Activated naive CD4-positive, alpha-beta T cell treated with anti-CD3 and anti-CD28 coated beads for 36 hours (primary cell): ENCODE measurements at regions of chr16 and their contacts with region 1.

Region 1: DNA sequence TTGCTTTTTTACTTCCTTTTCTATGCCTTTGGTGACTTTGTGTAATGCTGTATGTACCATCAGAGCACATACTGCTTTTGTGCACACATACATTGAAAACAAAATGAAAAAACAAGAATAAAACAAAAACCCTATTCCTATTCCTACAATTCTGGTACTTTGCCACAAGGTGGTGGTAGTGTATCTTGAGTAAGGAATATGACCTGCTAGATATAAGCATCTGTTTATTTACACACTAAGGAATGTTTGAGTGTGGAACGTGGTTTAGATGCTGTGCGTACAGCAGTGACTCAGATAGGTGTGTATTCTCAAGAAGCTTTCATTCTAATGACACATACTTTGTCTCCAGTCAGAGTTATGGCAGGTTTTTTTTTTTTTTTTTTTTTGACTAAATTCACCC is 606.2 kb downstream of the WWOX start:
- DNase-seq: no peak
- H3K4me3 Mint-ChIP-seq: no peak overlapping the region
- H3K27ac Mint-ChIP-seq: no peak overlapping the region
- H3K4me1 Mint-ChIP-seq: peaks cover 2% of the 10 kb centered on the region
- H3K27me3 Mint-ChIP-seq: no peaks in the 10 kb centered on the region

Region 2: GRCh38 chr16:78324649-78325285 is 380.9 kb before region 1 on chr16:
- CTCF ChIA-PET with region 1: no interaction called
- intact Hi-C with region 1: no loop called
- DNase-seq: no peak
- H3K4me3 Mint-ChIP-seq: no peak overlapping the region
- H3K27ac Mint-ChIP-seq: no peak overlapping the region
- H3K4me1 Mint-ChIP-seq: no peaks in the 10 kb centered on the region
- H3K27me3 Mint-ChIP-seq: no peaks in the 10 kb centered on the region

Region 3: DNA sequence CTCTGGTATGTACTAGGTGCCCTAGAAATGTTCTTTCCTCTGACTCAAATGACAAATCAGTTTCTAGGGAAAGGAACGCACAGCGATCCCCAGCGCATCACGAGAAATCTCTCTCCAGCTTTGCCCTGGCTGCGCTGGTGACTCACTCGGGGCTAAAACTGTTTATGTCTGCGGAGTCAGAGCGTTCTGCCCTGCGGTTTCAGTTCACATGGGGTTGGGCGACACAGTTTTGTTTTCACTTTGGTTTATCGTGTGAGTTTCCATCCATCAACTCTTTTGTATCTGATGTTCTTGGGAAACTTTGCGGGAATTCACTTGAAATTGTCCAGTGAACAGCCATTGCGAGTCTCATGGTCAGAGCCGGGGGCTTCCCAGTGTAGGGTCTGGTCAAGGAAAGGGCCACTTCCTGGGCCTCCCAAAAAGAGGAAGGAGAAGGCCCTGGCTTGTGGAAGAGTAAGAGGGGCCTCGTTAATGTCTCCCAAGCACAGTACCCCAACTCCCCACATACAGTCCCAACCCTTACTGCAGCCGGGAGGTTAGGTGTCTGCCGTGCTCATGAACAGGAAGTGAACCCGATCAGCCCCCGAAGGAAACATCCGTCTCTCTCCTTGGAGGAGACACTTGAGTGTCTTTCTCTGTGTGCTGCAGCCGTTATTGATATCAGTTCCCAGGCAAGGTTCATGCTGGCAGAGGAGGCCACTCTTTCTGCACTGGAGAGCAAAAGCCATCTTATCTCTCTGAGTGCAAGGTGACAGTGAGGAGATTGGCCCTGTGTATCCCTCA is 37.0 kb after region 1 on chr16:
- CTCF ChIA-PET with region 1: no interaction called
- intact Hi-C with region 1: loop called (anchors 2 kb)
- DNase-seq: peak; percentile 86
- H3K4me3 Mint-ChIP-seq: peak overlapping the region; percentile 66
- H3K27ac Mint-ChIP-seq: peak overlapping the region; percentile 42
- H3K4me1 Mint-ChIP-seq: peaks cover 22% of the 10 kb centered on the region
- H3K27me3 Mint-ChIP-seq: no peaks in the 10 kb centered on the region

Region 4: GRCh38 chr16:78770353-78771091 is 64.8 kb after region 1 on chr16:
- CTCF ChIA-PET with region 1: interaction called, 10 read pairs
- intact Hi-C with region 1: loop called (anchors 1 kb)
- DNase-seq: peak; percentile 84
- H3K4me3 Mint-ChIP-seq: no peak overlapping the region
- H3K27ac Mint-ChIP-seq: no peak overlapping the region
- H3K4me1 Mint-ChIP-seq: peaks cover 18% of the 10 kb centered on the region
- H3K27me3 Mint-ChIP-seq: no peaks in the 10 kb centered on the region

Region 5: DNA sequence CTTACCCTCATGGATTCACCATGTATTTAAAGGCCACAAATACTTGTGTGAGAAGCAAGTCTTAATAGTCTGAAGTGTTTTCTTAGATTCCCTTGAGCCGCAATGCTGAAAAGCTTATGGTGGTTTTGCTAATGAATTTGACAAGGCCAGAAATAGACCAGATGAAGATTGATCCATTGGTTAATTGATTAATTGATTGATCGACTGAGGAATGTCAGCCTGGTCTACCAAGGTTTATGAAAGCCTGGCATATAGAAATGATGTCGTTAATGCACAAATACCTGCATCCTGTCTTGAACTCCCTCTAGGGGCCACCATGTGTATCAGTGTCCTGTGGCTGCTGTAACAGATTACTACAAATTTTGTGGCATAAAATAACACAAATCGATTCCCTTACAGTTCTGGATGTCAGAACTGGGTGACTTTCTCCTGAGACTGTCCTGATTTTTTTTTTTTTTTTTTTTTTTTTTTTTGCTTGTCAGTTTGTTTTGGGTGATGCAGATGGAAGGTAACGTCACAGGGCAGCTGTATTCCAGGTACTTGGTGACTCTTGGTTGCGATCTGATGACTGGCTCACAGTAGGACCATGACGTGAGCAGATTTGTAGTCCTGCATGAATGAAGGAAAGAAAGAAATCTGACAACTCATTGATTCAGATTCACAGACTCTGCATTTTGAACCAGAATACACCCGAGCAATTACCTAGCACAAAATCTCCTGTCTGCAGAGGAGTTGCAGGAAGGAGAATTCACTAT is 341.7 kb after region 1 on chr16:
- CTCF ChIA-PET with region 1: no interaction called
- intact Hi-C with region 1: loop called (anchors 1 kb)
- DNase-seq: peak; percentile 17
- H3K4me3 Mint-ChIP-seq: no peak overlapping the region
- H3K27ac Mint-ChIP-seq: no peak overlapping the region
- H3K4me1 Mint-ChIP-seq: peaks cover 18% of the 10 kb centered on the region
- H3K27me3 Mint-ChIP-seq: no peaks in the 10 kb centered on the region

Region 6: DNA sequence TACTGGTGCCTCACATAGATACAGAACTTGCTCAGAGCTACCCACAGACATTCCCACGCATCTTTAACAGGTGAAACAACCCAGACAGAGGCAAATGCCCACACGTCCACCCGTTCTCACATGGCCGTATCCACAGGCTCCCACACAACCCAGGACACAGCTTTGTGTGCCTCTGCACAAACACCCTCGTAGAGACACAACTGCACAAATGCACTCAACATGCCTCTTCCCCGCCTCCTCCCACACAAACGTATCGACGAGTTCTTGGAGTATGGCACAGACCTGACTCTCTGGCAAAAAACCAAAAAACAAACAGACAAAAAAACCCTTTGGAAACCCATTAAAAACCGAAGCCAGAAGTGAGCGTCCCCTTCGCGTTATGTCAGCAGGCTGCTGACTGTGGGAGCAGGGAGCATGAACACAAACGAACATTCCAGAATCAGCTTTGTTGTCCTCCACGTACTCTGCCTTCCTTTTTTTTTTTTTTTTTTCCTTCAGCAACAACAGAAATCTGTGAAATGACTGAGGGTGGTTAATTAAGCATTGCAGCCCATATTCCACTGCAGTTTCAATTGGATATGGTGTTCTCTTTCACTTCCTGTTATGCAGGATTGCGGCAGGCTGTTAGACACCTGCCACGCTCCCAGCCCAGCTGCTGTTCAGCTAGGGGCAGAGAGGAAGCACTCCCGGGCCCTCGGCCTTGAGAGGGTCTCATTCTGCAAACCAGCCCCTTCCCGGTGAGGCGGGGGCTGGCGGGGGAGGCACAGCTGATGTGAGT is 581.1 kb after region 1 on chr16:
- CTCF ChIA-PET with region 1: no interaction called
- intact Hi-C with region 1: no loop called
- DNase-seq: peak; percentile 40
- H3K4me3 Mint-ChIP-seq: peak overlapping the region; percentile 10
- H3K27ac Mint-ChIP-seq: no peak overlapping the region
- H3K4me1 Mint-ChIP-seq: peaks cover 47% of the 10 kb centered on the region
- H3K27me3 Mint-ChIP-seq: peaks cover 9% of the 10 kb centered on the region

Region 7: DNA sequence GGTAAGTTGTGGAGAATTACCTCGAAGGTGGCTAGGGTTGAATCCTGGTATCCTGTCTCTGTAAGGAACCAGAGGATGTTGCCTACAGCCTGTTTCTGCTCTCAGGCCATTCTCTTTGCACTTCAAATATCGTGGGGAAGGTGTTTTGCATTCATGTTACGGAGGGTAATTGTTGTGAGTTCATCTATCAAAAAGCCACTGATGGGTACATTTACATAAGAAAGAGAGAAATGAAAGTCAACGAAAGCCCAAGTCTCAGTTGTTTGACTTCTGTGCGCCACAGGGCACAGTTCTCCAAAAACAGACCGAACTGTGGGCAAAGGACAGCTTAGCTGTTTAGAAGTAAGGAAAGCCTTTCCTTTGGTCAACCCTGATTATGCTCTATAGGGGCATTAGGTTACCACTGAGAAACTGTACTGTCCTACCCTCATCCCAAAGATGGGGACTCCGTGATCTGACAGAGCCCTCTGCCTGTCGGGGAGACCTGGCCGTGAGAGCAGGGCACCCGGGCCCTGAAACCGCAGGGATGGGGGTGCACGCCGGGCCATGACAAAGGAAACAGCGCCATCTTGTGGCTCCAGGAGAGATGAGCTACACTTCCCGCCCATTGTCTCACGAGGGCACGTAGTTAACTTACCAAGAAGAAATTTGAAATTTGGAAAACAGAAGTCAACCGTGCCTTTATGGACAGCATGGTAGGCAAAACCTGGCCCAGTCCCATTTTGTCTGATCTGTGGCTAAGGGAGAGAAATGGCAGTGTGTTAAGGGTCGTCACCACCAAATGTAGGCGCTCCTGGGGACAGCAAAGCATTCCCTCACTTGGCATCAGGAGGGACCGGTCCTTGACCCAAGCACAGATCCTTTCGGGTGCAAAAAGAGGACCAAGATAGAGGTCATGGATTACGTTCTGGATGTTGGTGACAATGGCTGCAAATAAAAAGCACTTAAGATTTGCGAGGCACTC is 1760.6 kb after region 1 on chr16:
- CTCF ChIA-PET with region 1: no interaction called
- intact Hi-C with region 1: loop called (anchors 5 kb)
- DNase-seq: peak; percentile 68
- H3K4me3 Mint-ChIP-seq: no peak overlapping the region
- H3K27ac Mint-ChIP-seq: no peak overlapping the region
- H3K4me1 Mint-ChIP-seq: no peaks in the 10 kb centered on the region
- H3K27me3 Mint-ChIP-seq: no peaks in the 10 kb centered on the region